ENCODE measurements at regions of chr2 and their contacts with region 1.

Region 1: GRCh38 chr2:231297108-231297908 is 98.2 kb upstream of the B3GNT7 start:
- DNase-seq: no peak
- H3K4me3 ChIP-seq: no peak overlapping the region
- CTCF ChIP-seq: peak; percentile 86

Region 2: GRCh38 chr2:231280846-231281245 is 16.5 kb before region 1 on chr2:
- CTCF ChIA-PET with region 1: interaction called, 21 read pairs
- POLR2A ChIA-PET with region 1: no interaction called
- DNase-seq: no peak
- H3K4me3 ChIP-seq: no peak overlapping the region
- CTCF ChIP-seq: no peak

Region 3: GRCh38 chr2:231312066-231312465 is 14.8 kb after region 1 on chr2:
- CTCF ChIA-PET with region 1: interaction called, 28 read pairs
- POLR2A ChIA-PET with region 1: no interaction called
- DNase-seq: no peak
- H3K4me3 ChIP-seq: no peak overlapping the region
- CTCF ChIP-seq: no peak

Region 4: GRCh38 chr2:231387904-231388724 is 90.8 kb after region 1 on chr2:
- CTCF ChIA-PET with region 1: interaction called, 14 read pairs
- POLR2A ChIA-PET with region 1: no interaction called
- DNase-seq: no peak
- H3K4me3 ChIP-seq: no peak overlapping the region
- CTCF ChIP-seq: peak; percentile 5

Region 5: GRCh38 chr2:231399853-231400680 is 102.8 kb after region 1 on chr2:
- CTCF ChIA-PET with region 1: interaction called, 206 read pairs
- POLR2A ChIA-PET with region 1: no interaction called
- DNase-seq: no peak
- H3K4me3 ChIP-seq: no peak overlapping the region
- CTCF ChIP-seq: no peak

Region 6: DNA sequence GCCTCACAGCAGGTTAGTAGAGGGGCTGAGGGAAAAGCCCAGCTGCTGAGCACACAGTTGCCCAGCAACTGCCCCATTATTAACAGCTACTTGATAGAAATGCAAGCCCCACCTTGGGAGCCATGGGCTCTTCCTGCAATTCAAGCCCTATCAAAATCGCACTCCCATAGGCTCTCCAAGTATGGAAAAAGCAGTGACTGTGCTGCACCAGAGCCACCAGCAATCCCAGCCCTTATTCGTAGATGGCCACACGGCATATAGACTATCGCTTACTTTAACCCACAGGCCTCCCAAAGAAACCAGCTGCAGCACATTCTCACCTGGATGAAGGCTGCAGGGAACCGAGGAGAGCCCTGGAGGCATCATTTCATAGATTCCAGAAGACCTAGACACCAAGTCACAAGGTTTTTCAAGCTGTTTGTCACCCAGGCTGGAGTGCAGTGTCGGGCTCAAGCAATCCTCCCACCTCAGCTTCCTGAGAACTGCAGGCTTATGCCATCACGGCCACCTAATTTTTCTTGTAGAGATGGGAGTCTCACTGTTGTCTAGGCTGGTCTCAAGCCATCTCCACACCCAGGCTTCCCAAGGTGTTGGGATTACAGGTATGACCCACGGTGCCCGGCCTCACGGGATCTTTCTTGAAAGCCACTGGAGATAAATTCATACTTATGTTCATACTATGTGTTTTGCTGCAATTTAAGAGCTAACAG is 155.6 kb after region 1 on chr2:
- CTCF ChIA-PET with region 1: interaction called, 17 read pairs
- POLR2A ChIA-PET with region 1: interaction called, 3 read pairs
- DNase-seq: no peak
- H3K4me3 ChIP-seq: no peak overlapping the region
- CTCF ChIP-seq: no peak